AG04449 (cell line): ENCODE measurements at regions of chr5 and their contacts with region 1.

Region 1: DNA sequence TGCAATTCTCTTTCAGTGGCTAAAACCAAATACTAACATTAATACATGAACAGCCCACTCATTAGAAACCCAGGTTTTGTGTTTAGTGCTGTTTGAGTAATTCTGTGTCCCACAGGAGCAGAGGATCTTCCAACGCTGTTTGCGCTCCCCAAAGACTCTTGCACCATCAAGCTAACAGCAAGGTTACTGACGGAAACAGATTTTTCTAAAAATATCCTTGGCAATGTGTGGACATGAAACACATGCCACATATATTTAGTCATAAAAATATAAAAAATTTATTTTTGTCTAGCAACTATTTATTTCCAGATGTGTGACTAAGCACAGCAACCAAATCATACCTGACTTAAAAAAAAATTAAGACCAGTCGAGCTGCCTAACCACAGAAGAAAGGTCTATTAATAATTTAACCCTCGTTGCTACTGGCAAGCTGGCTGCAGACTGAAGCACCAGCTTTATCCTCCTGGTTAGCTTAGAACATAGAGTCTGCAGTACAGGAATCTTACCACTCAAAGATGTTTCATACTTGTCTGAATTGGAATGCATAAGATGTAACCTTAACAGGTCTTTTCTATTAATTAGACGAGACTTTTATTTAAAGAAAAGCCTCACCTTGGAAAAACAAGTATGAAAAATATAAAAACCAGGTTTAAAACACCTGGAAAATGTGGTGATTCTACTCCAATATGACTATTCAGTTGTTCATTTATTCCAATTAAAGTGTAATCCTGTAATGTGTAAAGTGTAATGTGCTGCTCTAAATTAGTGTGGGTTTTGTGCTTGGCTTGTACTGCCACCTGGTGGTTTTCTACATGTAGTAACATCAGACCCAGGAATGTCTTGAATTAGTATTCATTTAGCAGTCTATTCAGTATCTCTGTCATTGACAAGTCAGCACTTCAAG is 272.5 kb downstream of the EPB41L4A start:
- DNase-seq: peak; percentile 65
- H3K4me3 ChIP-seq: no peak overlapping the region
- CTCF ChIP-seq: peak; percentile 50

Region 2: DNA sequence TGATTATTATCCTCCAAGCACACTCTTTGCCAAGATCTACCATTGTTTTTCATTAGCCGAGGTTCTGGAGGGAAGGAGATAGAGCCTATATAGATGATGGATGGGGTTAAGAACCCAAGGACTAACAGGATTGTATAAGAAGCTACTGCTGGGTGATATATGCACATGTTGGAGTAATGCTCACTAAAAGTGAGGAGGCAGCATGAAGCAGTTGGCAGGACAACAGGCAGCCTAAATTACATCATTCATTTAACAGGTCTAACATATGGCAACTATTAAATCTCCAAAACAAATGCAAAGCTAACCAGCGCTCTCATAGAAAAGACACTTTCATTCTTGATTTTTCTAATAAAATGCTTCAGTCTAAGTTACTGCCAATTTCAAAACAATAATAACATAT is 20.7 kb before region 1 on chr5:
- CTCF ChIA-PET with region 1: no interaction called
- POLR2A ChIA-PET with region 1: no interaction called
- DNase-seq: peak; percentile 23
- H3K4me3 ChIP-seq: no peak overlapping the region
- CTCF ChIP-seq: no peak

Region 3: GRCh38 chr5:112160652-112161391 is 14.2 kb after region 1 on chr5:
- CTCF ChIA-PET with region 1: interaction called, 12 read pairs
- POLR2A ChIA-PET with region 1: interaction called, 3 read pairs
- DNase-seq: peak; percentile 40
- H3K4me3 ChIP-seq: peak overlapping the region; percentile 95
- CTCF ChIP-seq: peak; percentile 100